ENCODE measurements at regions of chr2 and their contacts with region 1.

Region 1: DNA sequence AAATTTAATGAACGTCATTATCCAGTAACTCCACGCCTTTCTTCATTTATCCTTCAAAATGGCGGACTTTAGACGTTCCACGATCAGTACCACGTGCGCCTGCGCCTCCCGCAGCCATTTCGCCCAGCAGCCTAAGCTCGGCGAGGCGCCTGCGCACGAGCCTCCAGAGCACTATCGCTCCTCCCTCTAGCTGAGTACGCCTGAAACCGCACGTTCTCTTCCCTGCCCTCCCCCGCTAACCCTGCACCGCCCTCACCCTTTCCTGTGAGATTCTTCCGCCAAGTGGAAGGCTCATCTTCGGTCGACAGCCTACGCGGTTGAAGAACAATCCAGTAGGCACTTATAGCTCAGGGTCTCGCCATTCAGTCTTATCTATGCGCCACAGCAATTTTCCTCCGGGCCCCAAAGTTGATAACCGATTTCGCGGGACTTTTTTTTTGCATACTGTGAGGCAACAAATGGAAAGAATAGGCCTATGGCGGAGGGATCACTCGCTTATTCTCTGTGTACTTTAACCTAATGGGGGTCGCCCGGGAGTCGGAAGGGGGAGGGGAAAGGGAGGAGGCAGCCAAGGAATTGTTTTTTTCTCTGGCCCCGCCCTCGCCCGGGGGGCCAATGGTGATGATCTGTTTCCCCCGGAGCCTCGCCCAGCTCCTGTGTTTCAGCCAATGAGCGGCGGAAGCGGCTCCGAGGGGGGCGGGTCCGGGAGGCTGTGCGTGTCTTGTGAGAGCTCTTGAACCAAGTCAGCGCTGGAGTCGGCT is at the start of gene KDM3A:
- DNase-seq: peak; percentile 100
- H3K4me3 ChIP-seq: peak within 1 kb of the TSS; percentile 69 to 93 (median 82)
- H3K27ac ChIP-seq: peak within 1 kb of the TSS; percentile 97 to 99
- H3K4me1 ChIP-seq: peaks cover 13 to 31% (median 24%) of the 10 kb centered on the region in 4 experiments
- H3K27me3 ChIP-seq: no peaks in the 10 kb centered on the region

Region 2: GRCh38 chr2:86414996-86415395 is 25.8 kb before region 1 on chr2:
- CTCF ChIA-PET with region 1: interaction called, 8 read pairs
- POLR2A ChIA-PET with region 1: interaction called, 10 read pairs
- DNase-seq: peak in 2 of 3 donors; percentile 62 to 78
- H3K4me3 ChIP-seq: peak overlapping the region in 1 of 7 experiments; percentile 44
- H3K27ac ChIP-seq: no peak overlapping the region
- H3K4me1 ChIP-seq: peaks cover 4 to 49% (median 26%) of the 10 kb centered on the region in 4 experiments
- H3K27me3 ChIP-seq: no peaks in the 10 kb centered on the region